CD4-positive, alpha-beta T cell (primary cell): ENCODE measurements at regions of chr16 and their contacts with region 1.

Region 1: GRCh38 chr16:87821376-87822107 is 47.8 kb downstream of the SLC7A5 start:
- DNase-seq: peak in 1 of 14 experiments; percentile 16
- ATAC-seq: peak; percentile 48
- H3K4me3 ChIP-seq: no peak overlapping the region
- H3K4me3 Mint-ChIP-seq: no peak overlapping the region
- H3K27ac ChIP-seq: no peak overlapping the region
- H3K27ac Mint-ChIP-seq: peak overlapping the region; percentile 49
- H3K4me1 ChIP-seq: peaks cover 7% of the 10 kb centered on the region
- H3K4me1 Mint-ChIP-seq: peaks cover 4% of the 10 kb centered on the region
- H3K27me3 ChIP-seq: no peaks in the 10 kb centered on the region
- H3K27me3 Mint-ChIP-seq: no peaks in the 10 kb centered on the region
- CTCF ChIP-seq: no peak

Region 2: DNA sequence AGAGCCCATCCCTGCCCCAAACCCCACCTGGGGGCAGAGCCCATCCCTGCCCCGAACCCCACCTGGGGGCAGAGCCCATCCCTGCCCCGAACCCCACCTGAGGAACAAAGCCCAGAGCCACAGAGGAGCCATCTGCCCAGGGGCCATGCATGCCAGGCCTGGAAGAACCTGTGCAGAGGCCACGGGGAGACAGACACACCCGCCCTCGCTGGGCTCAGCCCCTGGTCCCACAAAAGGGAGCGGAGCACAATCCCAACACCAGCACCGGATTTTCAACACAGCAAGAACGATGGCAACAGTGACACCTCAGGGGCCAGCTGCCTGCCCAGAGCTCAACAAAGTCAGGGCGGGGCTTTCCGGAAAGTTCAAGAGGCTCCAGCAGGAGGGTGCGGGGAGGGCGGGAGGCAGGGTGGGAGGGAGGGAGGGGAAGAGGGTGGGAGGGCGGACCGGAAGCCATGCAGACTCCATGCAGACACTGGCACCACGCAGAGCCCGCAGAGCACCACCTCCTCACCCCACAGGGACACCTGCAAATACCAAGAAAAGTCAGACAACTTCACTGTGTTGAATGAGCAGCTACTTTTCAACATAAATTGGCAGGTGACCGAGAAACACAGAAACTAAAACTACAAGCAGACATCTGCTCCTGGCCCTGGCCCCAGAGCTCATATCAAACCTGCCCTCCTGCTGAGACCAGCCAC is 476.5 kb before region 1 on chr16:
- CTCF ChIA-PET with region 1: no interaction called
- POLR2A ChIA-PET with region 1: no interaction called
- intact Hi-C with region 1: no loop called
- DNase-seq: peak; percentile 3 to 84 (median 58)
- ATAC-seq: peak; percentile 91
- H3K4me3 ChIP-seq: peak overlapping the region; percentile 12
- H3K4me3 Mint-ChIP-seq: peak overlapping the region; percentile 50
- H3K27ac ChIP-seq: peak overlapping the region; percentile 9 to 43
- H3K27ac Mint-ChIP-seq: peak overlapping the region; percentile 93
- H3K4me1 ChIP-seq: peaks cover 29% of the 10 kb centered on the region
- H3K4me1 Mint-ChIP-seq: peaks cover 16% of the 10 kb centered on the region
- H3K27me3 ChIP-seq: no peaks in the 10 kb centered on the region
- H3K27me3 Mint-ChIP-seq: no peaks in the 10 kb centered on the region
- CTCF ChIP-seq: no peak

Region 3: GRCh38 chr16:87540945-87541877 is 280.3 kb before region 1 on chr16:
- CTCF ChIA-PET with region 1: no interaction called
- POLR2A ChIA-PET with region 1: no interaction called
- intact Hi-C with region 1: no loop called
- DNase-seq: no peak
- ATAC-seq: no peak
- H3K4me3 ChIP-seq: no peak overlapping the region
- H3K4me3 Mint-ChIP-seq: no peak overlapping the region
- H3K27ac ChIP-seq: no peak overlapping the region
- H3K27ac Mint-ChIP-seq: no peak overlapping the region
- H3K4me1 ChIP-seq: peaks cover 5% of the 10 kb centered on the region
- H3K4me1 Mint-ChIP-seq: peaks cover 4% of the 10 kb centered on the region
- H3K27me3 ChIP-seq: peaks cover 0 to 13% of the 10 kb centered on the region in 2 experiments
- H3K27me3 Mint-ChIP-seq: peaks cover 60% of the 10 kb centered on the region
- CTCF ChIP-seq: no peak

Region 4: GRCh38 chr16:87844120-87844733 is 22.7 kb after region 1 on chr16:
- CTCF ChIA-PET with region 1: no interaction called
- POLR2A ChIA-PET with region 1: no interaction called
- intact Hi-C with region 1: loop called in 1 of 2 experiments (anchors 2 kb)
- DNase-seq: no peak
- ATAC-seq: no peak
- H3K4me3 ChIP-seq: no peak overlapping the region
- H3K4me3 Mint-ChIP-seq: peak overlapping the region; percentile 34
- H3K27ac ChIP-seq: no peak overlapping the region
- H3K27ac Mint-ChIP-seq: no peak overlapping the region
- H3K4me1 ChIP-seq: peaks cover 10% of the 10 kb centered on the region
- H3K4me1 Mint-ChIP-seq: peaks cover 6% of the 10 kb centered on the region
- H3K27me3 ChIP-seq: no peaks in the 10 kb centered on the region
- H3K27me3 Mint-ChIP-seq: no peaks in the 10 kb centered on the region
- CTCF ChIP-seq: no peak